OCI-LY7 (cell line): ENCODE measurements at regions of chr5 and their contacts with region 1.

Region 1: DNA sequence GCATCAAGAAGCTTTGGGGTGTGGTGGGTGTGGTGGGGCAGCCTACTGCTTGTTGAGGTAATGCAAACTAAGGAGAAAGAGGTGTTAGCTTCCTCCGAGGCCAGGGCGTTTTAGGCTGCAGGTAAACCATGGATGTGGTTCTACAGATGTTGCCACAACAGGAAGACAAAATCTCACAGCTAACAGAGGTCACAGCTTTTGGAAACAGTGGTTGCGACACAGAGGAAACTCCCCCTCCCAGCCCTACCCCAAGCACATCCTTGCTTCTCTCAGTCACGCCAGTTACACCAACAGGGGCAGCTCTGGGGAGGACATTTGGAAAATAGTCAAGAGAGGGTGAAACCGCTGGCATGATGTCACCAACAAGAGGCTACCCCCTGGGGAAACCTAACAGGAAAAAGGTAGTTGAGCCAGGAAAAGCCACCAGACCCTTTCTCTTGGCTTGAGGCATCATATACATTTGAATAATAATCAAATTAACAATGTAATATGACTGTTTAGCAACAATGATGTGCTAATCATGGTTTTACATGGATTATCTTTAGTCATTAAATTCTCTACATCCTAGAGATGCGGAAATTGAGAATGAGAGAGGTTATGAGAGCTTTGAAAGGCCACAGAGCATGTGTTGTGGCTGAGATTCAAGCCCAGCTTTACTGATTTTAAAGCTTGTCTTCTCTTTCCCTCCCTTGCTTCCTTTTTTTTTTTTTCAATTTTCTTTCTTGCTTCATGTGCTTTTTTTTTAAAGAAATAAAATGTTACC is 82.2 kb upstream of the IL12B start:
- DNase-seq: peak; percentile 30
- H3K4me3 ChIP-seq: no peak overlapping the region
- H3K27ac ChIP-seq: no peak overlapping the region
- H3K4me1 ChIP-seq: peaks cover 9% of the 10 kb centered on the region
- CTCF ChIP-seq: no peak

Region 2: GRCh38 chr5:159100025-159100781 is 312.3 kb before region 1 on chr5:
- CTCF ChIA-PET with region 1: no interaction called
- POLR2A ChIA-PET with region 1: no interaction called
- intact Hi-C with region 1: no loop called
- DNase-seq: peak; percentile 93
- H3K4me3 ChIP-seq: peak overlapping the region; percentile 94
- H3K27ac ChIP-seq: peak overlapping the region; percentile 90
- H3K4me1 ChIP-seq: peaks cover 50% of the 10 kb centered on the region
- CTCF ChIP-seq: no peak

Region 3: DNA sequence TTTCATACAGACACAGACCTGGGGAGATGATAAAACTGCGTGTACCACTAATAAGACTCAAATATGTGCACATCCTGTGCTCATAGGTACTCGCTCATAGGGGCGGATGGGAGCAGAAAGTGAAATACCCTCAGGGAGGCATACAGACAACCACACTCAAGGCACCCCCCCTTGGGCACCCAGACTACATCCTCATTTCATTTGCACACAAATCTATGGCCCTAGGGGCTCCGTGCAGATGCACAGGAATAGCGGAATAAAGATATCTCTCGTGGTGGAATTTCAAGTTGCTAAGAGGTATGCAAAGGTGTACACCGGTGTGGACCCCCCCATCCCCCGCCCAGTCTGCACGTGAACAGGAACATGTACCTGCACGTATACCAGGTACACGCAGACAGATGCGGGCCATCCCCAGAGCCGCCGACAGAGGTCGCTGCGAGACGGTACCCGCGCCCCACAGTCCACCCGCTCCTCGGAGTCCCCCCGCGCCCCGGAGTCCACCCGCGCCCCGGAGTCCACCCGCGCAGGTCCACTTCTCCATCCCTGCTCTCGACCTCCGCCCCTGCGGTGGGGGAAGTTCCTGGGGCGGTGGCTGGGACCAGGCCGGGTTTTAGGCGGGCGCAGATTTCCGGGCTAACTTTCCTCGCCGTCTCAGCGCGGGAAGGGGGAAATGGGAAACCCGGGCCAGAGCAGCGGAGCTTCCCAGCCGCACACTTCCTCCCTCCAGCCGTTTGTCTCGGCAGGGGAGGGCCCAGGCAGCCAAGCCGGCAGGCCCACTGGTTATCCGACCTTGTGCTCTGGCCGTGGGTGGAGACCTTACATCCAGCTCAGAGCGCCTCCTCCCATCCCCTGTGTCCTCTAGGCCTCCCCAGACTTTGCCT is 81.1 kb before region 1 on chr5:
- CTCF ChIA-PET with region 1: no interaction called
- POLR2A ChIA-PET with region 1: interaction called, 3 read pairs
- intact Hi-C with region 1: loop called (anchors 2 kb)
- DNase-seq: peak; percentile 73
- H3K4me3 ChIP-seq: peak overlapping the region; percentile 72
- H3K27ac ChIP-seq: peak overlapping the region; percentile 57
- H3K4me1 ChIP-seq: peaks cover 36% of the 10 kb centered on the region
- CTCF ChIP-seq: peak; percentile 84

Region 4: DNA sequence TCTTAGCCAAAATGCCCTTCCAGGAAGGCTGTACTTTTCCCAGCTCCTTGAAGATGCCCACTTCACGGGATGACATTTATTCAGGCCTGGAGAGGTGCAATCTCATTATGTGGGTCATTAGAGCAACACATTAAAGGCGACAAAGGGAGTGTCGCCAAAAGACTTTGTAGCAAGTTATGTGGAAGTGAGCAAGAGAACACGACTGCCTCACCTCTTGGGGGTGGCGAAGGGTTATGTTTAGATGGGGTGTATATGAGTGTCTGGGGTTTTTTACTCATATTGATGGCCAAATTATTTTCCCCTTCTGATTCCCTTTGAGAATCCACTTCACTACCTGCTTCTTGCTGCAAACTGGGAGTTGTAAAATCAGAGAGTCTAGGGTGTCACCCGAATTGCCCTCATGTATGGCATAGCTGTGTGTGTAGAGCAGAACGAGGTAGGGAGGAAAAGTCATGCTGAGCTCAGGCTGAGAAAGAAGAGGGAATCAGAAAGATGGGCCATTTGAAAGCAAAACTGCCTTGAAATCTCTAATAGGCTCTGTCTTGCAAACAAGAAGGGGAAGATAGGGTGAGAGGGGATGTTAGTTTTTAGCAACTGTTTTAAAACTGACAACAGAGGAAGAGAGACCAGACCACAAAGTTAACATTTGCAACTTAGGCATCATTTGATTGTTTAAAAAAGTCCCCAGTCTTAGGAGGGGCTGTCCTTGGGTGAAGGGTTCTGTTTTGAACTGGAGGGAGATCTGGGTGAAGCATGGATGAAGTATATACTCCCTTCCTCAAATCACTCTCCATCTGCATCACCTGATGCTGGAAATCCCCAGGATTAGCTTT is 14.9 kb after region 1 on chr5:
- CTCF ChIA-PET with region 1: interaction called, 3 read pairs
- POLR2A ChIA-PET with region 1: interaction called, 10 read pairs
- intact Hi-C with region 1: loop called (anchors 1 kb)
- DNase-seq: no peak
- H3K4me3 ChIP-seq: no peak overlapping the region
- H3K27ac ChIP-seq: no peak overlapping the region
- H3K4me1 ChIP-seq: no peaks in the 10 kb centered on the region
- CTCF ChIP-seq: no peak

Region 5: GRCh38 chr5:159498630-159499029 is 86.2 kb after region 1 on chr5:
- CTCF ChIA-PET with region 1: no interaction called
- POLR2A ChIA-PET with region 1: no interaction called
- intact Hi-C with region 1: no loop called
- DNase-seq: no peak
- H3K4me3 ChIP-seq: no peak overlapping the region
- H3K27ac ChIP-seq: no peak overlapping the region
- H3K4me1 ChIP-seq: no peaks in the 10 kb centered on the region
- CTCF ChIP-seq: no peak